GM12878 (cell line): ENCODE measurements at regions of chr1 and their contacts with region 1.

Region 1: GRCh38 chr1:154558575-154559465 is at the start of gene UBE2Q1:
- DNase-seq: peak; percentile 97
- ATAC-seq: peak; percentile 97
- H3K4me3 ChIP-seq: peak within 1 kb of the TSS; percentile 88
- H3K27ac ChIP-seq: peak within 1 kb of the TSS; percentile 88
- H3K4me1 ChIP-seq: peaks cover 4% of the 10 kb centered on the region
- H3K27me3 ChIP-seq: no peaks in the 10 kb centered on the region
- CTCF ChIP-seq: no peak
- EP300 ChIP-seq: no peak; a peak in 1 of 4 replicates
- POLR2A ChIP-seq: peak; percentile 77
- RAD21 ChIP-seq: no peak
- polyA plus RNA-seq, gene UBE2Q1: 11.0 to 20.3 TPM

Region 2: DNA sequence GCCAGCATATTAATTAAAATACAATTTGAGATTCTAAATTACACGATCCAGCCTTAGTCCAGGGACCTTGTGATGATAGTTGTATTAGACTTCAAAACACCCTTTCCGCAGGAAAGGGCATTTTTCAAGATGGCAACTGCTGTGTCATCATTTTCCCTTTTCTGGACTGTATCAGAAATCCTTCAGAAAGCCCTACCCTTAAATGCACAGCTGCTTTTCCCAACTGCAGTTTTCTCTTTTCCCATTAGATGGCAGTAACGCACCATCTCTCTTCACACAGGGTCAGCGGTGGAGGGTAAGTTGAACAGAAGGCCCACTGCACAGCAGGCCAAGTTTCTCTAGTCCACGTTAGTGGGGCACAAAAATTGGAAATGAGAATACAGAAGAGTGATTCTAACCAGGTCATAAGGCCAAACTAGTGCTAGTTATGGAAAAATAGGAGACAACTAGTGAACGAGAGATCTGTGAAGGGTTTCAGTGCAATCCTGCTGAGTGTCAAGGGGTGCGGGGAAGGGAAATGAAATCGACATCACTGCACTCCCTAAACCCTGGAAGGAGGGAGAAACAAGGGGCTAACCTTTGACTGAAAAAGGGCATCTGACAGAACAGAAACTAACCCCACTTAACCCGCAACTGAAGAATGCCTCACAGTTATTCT is 78.9 kb before region 1 on chr1:
- CTCF ChIA-PET with region 1: interaction called, 49 read pairs
- POLR2A ChIA-PET with region 1: no interaction called
- RAD21 ChIA-PET with region 1: interaction called, 9 read pairs
- SMC1A ChIA-PET with region 1: interaction called, 20 read pairs
- in situ Hi-C with region 1: loop called (anchors 5 kb)
- intact Hi-C with region 1: no loop called
- DNase-seq: peak; percentile 45
- ATAC-seq: peak; percentile 97
- H3K4me3 ChIP-seq: no peak overlapping the region
- H3K27ac ChIP-seq: no peak overlapping the region
- H3K4me1 ChIP-seq: peaks cover 3% of the 10 kb centered on the region; the same call in 1 of the 2 replicates
- H3K27me3 ChIP-seq: peaks cover 0 to 3% of the 10 kb centered on the region in 2 experiments; a peak in 1 of 4 replicates
- CTCF ChIP-seq: peak; percentile 92 to 95 (median 92); a peak in 5 of 6 replicates
- EP300 ChIP-seq: no peak
- POLR2A ChIP-seq: no peak
- RAD21 ChIP-seq: peak; percentile 100

Region 3: DNA sequence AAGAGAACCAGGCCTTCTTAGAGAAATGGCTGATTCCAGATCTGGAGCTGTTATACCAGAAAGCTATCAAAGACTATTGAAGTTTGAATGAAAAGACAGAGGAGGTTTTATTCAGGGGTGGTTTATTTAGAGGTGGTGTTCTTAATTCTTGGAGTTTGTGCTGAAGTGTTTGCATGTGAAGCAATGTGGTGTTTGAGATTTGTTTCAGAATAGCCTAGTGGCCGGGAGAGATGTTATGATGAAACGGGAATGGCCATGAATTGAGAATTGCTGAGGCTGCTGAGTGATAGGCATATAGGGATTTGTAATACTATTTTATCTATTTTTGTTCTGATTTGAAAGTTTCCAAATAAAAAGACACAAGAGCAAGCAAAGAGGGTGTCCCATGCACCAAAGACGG is 46.1 kb before region 1 on chr1:
- CTCF ChIA-PET with region 1: no interaction called
- POLR2A ChIA-PET with region 1: no interaction called
- RAD21 ChIA-PET with region 1: no interaction called
- SMC1A ChIA-PET with region 1: no interaction called
- in situ Hi-C with region 1: no loop called
- intact Hi-C with region 1: no loop called
- DNase-seq: no peak
- ATAC-seq: no peak
- H3K4me3 ChIP-seq: no peak overlapping the region
- H3K27ac ChIP-seq: no peak overlapping the region
- H3K4me1 ChIP-seq: no peaks in the 10 kb centered on the region
- H3K27me3 ChIP-seq: peaks cover 3 to 4% of the 10 kb centered on the region in 2 experiments
- CTCF ChIP-seq: no peak
- EP300 ChIP-seq: no peak
- POLR2A ChIP-seq: no peak
- RAD21 ChIP-seq: no peak

Region 4: GRCh38 chr1:154595621-154596020 is 36.8 kb after region 1 on chr1:
- CTCF ChIA-PET with region 1: interaction called, 15 read pairs
- POLR2A ChIA-PET with region 1: interaction called, 3 read pairs
- RAD21 ChIA-PET with region 1: interaction called, 5 read pairs
- SMC1A ChIA-PET with region 1: interaction called, 6 read pairs
- in situ Hi-C with region 1: no loop called
- intact Hi-C with region 1: no loop called
- DNase-seq: no peak
- ATAC-seq: no peak
- H3K4me3 ChIP-seq: no peak overlapping the region
- H3K27ac ChIP-seq: no peak overlapping the region
- H3K4me1 ChIP-seq: no peaks in the 10 kb centered on the region
- H3K27me3 ChIP-seq: no peaks in the 10 kb centered on the region
- CTCF ChIP-seq: no peak
- EP300 ChIP-seq: no peak
- POLR2A ChIP-seq: no peak
- RAD21 ChIP-seq: no peak

Region 5: DNA sequence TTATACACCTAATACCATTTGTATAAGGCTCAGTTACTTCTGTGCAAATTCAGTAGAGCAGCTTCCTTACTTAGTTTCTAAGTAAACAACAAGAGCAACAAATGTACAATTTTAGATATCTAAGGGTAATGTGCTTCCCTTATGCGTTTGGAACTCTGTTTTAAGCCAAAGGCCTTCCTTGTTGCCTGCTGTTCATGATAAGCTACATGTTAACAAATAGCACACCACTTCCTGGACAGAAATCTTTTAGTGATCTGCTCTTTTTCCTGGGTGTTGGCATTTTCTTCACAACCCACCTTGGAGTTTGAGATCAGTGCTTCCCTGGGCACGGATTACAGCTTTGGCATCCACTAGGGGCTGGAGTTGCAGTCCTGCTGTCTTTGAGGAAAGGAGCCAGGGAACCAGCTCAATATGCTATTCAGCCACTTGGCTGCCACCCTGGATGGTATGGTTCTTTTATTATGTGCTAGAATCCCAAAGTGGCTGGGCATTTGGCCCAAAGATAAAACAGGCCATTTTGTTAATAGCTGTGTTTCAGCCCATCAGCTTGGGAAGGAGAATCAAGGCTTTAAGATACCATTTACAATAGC is 104.7 kb after region 1 on chr1:
- CTCF ChIA-PET with region 1: interaction called, 31 read pairs
- POLR2A ChIA-PET with region 1: interaction called, 3 read pairs
- RAD21 ChIA-PET with region 1: interaction called, 20 read pairs
- SMC1A ChIA-PET with region 1: interaction called, 15 read pairs
- in situ Hi-C with region 1: no loop called
- intact Hi-C with region 1: no loop called
- DNase-seq: no peak
- ATAC-seq: no peak
- H3K4me3 ChIP-seq: no peak overlapping the region
- H3K27ac ChIP-seq: no peak overlapping the region
- H3K4me1 ChIP-seq: no peaks in the 10 kb centered on the region
- H3K27me3 ChIP-seq: no peaks in the 10 kb centered on the region; a peak in 1 of 4 replicates
- CTCF ChIP-seq: no peak
- EP300 ChIP-seq: no peak
- POLR2A ChIP-seq: no peak
- RAD21 ChIP-seq: no peak

Region 6: DNA sequence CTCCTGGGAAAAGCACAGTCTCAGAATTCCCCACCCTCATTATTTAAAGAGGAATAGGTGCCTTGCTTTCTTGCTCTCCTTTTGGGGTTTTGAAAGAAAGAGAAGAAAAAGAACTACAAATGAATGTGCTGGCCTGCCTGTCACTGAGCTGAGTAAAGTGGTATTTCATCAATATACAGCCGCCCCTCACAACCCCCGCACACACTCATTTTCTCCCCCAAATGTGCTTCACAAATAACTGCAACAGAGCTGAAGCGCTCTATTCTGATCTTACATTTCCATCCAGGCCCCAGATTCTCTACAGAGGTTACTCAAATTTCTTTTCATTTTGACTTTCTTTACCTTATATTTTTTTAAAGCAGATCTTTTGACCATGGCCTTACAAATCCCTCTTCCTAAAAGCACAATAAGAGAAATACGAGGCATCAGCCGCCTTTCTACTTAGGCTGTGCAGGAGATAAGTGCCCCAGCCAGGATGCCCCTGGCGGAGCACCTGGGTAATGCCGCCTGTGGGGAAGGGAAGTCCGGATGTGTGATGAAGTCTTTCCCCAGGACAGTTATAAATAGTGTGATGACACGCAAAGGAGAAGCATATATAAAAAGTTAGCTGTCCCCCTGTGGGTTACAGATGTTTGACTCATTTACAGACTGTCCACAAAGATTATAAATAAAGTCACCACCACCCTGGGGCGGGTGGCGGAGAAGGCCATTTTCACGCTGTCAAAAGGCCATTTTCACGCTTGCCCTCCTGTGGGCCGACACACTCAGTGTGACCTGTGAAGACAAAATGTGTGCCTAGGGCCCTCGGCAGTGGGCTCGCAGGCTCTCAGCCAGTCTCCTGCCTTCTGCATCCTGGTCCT is 304.7 kb after region 1 on chr1:
- CTCF ChIA-PET with region 1: interaction called, 8 read pairs
- POLR2A ChIA-PET with region 1: no interaction called
- RAD21 ChIA-PET with region 1: interaction called, 12 read pairs
- SMC1A ChIA-PET with region 1: interaction called, 6 read pairs
- in situ Hi-C with region 1: no loop called
- intact Hi-C with region 1: no loop called
- DNase-seq: peak; percentile 85
- ATAC-seq: peak; percentile 39
- H3K4me3 ChIP-seq: peak overlapping the region; percentile 49; the same call in 1 of the 2 replicates
- H3K27ac ChIP-seq: peak overlapping the region; percentile 79
- H3K4me1 ChIP-seq: peaks cover 88% of the 10 kb centered on the region
- H3K27me3 ChIP-seq: no peaks in the 10 kb centered on the region
- CTCF ChIP-seq: peak; percentile 77 to 95 (median 88)
- EP300 ChIP-seq: peak; percentile 61 to 89; a peak in 2 of 4 replicates
- POLR2A ChIP-seq: peak; percentile 39; the same call in 1 of the 2 replicates
- RAD21 ChIP-seq: peak; percentile 70

Region 7: GRCh38 chr1:154884869-154885701 is 326.3 kb after region 1 on chr1:
- CTCF ChIA-PET with region 1: interaction called, 14 read pairs
- POLR2A ChIA-PET with region 1: interaction called, 3 read pairs
- RAD21 ChIA-PET with region 1: interaction called, 44 read pairs
- SMC1A ChIA-PET with region 1: interaction called, 45 read pairs
- in situ Hi-C with region 1: no loop called
- intact Hi-C with region 1: no loop called
- DNase-seq: no peak
- ATAC-seq: no peak
- H3K4me3 ChIP-seq: no peak overlapping the region
- H3K27ac ChIP-seq: no peak overlapping the region
- H3K4me1 ChIP-seq: peaks cover 6% of the 10 kb centered on the region
- H3K27me3 ChIP-seq: no peaks in the 10 kb centered on the region
- CTCF ChIP-seq: no peak
- EP300 ChIP-seq: no peak
- POLR2A ChIP-seq: no peak
- RAD21 ChIP-seq: no peak

Region 8: GRCh38 chr1:155063550-155064110 is 504.8 kb after region 1 on chr1 and contains the start of gene EFNA4:
- CTCF ChIA-PET with region 1: interaction called, 20 read pairs
- POLR2A ChIA-PET with region 1: no interaction called
- RAD21 ChIA-PET with region 1: interaction called, 4 read pairs
- SMC1A ChIA-PET with region 1: interaction called, 5 read pairs
- in situ Hi-C with region 1: loop called (anchors 5 kb)
- intact Hi-C with region 1: loop called (anchors 2 kb)
- DNase-seq: no peak
- ATAC-seq: peak; percentile 90
- H3K4me3 ChIP-seq: peak within 1 kb of the TSS; percentile 95
- H3K27ac ChIP-seq: peak within 1 kb of the TSS; percentile 51
- H3K4me1 ChIP-seq: peaks cover 16% of the 10 kb centered on the region
- H3K27me3 ChIP-seq: no peaks in the 10 kb centered on the region
- CTCF ChIP-seq: no peak
- EP300 ChIP-seq: no peak
- POLR2A ChIP-seq: peak; percentile 85
- RAD21 ChIP-seq: no peak
- polyA plus RNA-seq, gene EFNA4: 0.52 to 1.3 TPM